Psoas muscle (tissue), 8 donors: ENCODE measurements at regions of chr17 and their contacts with region 1.

Region 1: GRCh38 chr17:7627250-7628121 is at the start of gene SAT2:
- DNase-seq: peak; percentile 97 to 98
- ATAC-seq: peak; percentile 98 to 99 (median 99)
- H3K4me3 ChIP-seq: peak within 1 kb of the TSS; percentile 92
- H3K27ac ChIP-seq: peak within 1 kb of the TSS; percentile 97
- H3K4me1 ChIP-seq: peaks cover 13% of the 10 kb centered on the region
- H3K27me3 ChIP-seq: no peaks in the 10 kb centered on the region
- CTCF ChIP-seq: no peak
- total RNA-seq, gene SAT2: 60.7 to 70.4 (median 66.2) TPM

Region 2: DNA sequence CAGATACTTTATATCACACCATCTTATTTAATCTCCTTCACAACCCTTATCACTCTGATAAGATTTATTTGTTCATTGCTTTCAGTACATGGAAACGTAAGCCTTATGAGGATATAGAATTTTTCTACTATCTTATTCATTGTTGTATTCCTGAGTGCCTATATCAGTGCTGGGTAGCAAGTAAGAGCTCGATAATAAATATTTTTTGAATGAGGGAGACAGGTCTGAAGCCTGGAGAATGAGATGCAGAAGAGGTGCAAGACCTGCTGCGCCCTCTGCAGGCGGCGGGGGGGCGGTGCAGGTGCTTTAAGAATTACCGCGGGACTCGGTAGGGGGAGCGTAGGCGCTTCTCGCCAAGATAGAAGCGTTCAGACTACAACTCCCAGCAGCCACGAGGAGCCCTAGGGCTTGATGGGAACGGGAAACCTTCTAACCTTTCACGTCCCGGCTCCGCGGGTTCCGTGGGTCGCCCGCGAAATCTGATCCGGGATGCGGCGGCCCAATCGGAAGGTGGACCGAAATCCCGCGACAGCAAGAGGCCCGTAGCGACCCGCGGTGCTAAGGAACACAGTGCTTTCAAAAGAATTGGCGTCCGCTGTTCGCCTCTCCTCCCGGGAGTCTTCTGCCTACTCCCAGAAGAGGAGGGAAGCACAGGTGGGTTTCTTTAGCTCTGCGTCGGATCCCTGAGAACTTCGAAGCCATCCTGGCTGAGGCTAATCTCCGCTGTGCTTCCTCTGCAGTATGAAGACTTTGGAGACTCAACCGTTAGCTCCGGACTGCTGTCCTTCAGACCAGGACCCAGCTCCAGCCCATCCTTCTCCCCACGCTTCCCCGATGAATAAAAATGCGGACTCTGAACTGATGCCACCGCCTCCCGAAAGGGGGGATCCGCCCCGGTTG is 60.7 kb after region 1 on chr17 and contains the start of gene WRAP53:
- intact Hi-C with region 1: loop called (anchors 2 kb)
- DNase-seq: peak; percentile 97 to 98
- ATAC-seq: peak; percentile 84 to 91 (median 89)
- H3K4me3 ChIP-seq: peak within 1 kb of the TSS; percentile 88
- H3K27ac ChIP-seq: peak within 1 kb of the TSS; percentile 98
- H3K4me1 ChIP-seq: peaks cover 29% of the 10 kb centered on the region
- H3K27me3 ChIP-seq: no peaks in the 10 kb centered on the region
- CTCF ChIP-seq: peak; percentile 99
- total RNA-seq, gene WRAP53: 4.5 to 6.6 (median 5.0) TPM